ENCODE measurements at regions of chr17 and their contacts with region 1.

Region 1: DNA sequence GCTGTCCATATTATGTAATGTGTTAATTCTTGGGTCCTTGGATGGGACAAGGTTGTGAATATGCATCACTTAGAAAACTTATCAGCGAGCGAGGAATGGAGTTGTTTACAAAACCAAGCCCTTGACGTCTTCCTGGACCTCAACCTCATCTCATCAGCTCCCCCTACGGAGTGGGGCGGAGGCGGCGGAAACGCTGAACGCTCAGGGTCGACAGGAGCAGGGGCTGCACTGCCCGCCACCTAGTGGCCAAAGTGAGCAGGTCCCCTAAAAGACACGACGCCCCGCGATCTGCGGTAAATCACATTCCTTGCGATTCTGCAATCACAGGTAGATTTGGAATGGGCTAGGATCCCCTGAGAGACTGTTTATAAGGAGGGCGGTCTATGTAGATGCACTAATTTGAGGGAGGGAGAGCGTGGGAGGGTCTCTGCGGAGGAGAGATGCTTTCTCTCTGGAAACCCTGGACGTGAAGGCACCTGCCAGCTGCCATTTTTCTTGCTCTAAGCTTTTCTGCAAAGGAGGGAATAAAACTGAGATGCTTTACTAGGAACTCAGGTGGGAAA is 5.4 kb upstream of the ICAM2 start:
- DNase-seq: peak; percentile 79
- H3K4me3 ChIP-seq: no peak overlapping the region
- H3K27ac ChIP-seq: peak overlapping the region; percentile 44
- H3K4me1 ChIP-seq: peaks cover 8% of the 10 kb centered on the region
- H3K27me3 ChIP-seq: no peaks in the 10 kb centered on the region
- CTCF ChIP-seq: peak; percentile 92

Region 2: GRCh38 chr17:63919311-63919723 is 106.5 kb before region 1 on chr17:
- intact Hi-C with region 1: loop called (anchors 10 kb)
- DNase-seq: peak; percentile 65
- H3K4me3 ChIP-seq: no peak overlapping the region
- H3K27ac ChIP-seq: no peak overlapping the region
- H3K4me1 ChIP-seq: no peaks in the 10 kb centered on the region
- H3K27me3 ChIP-seq: no peaks in the 10 kb centered on the region
- CTCF ChIP-seq: peak; percentile 97